GM10248 (cell line): ENCODE measurements at regions of chr3 and their contacts with region 1.

Region 1: DNA sequence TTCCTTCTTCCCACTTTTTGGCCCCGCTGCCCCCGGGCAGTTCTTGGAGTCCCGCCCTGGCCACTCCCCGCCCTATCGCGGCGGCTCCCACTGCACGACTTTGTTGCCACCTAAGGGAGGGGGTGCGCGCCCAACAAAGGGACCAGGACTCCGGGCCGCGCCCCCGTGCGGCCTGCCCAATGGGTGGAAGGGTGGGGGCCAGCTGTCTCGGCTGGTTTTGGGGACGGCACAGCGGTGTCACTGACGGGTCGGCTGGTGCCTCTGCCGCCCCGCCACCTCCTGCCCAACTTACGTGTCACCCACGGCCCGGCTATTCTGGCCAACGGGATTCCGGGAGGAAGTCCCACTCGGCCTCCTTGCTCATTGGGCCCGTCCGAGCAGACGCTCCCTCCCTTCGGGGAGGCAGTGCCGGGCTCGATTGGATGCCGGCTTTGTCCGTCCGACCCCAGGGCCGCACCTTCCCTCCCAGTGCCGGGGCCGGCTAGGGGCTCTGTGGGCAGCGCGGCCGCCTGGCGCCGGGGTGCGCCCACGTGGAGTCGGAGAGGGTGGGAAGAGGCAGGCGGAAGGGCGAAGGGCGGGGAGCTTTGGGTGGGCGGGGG is at the start of gene GOLIM4:
- DNase-seq: peak; percentile 96
- CTCF ChIP-seq: peak; percentile 30

Region 2: DNA sequence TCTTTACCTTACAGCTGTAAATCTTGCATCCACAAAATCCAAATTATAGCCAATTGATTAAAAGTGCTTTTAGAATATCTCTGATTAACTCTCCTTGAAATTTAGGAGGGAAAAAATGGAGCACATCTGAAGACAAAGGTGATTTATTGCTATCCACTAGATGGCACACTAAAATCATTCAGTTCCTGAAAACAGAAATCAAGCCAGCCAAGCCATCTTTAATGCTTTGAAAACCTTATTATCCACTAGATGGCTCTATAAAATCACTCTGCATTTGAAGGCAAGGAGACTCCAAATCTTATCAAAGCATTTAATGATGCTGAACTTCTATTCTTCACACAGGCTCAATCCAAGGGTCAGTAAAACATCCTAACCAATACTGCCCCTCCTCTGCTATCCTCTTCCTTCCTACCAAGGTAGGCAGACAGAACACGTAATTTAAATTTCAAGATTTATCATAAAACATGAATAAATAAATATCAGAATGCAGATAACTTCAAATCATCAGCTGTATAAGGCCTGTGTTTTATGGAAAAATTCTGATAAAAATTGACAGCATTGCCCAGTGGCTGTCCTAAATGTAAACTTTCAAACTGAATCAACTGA is 48.4 kb before region 1 on chr3:
- CTCF ChIA-PET with region 1: interaction called, 11 read pairs
- POLR2A ChIA-PET with region 1: interaction called, 3 read pairs
- DNase-seq: peak; percentile 57
- CTCF ChIP-seq: peak; percentile 69